ENCODE measurements at regions of chr9 and their contacts with region 1.

Region 1: GRCh38 chr9:109517901-109518377 is 19.8 kb upstream of the PTPN3 start:
- DNase-seq: no peak
- ATAC-seq: no peak

Region 2: DNA sequence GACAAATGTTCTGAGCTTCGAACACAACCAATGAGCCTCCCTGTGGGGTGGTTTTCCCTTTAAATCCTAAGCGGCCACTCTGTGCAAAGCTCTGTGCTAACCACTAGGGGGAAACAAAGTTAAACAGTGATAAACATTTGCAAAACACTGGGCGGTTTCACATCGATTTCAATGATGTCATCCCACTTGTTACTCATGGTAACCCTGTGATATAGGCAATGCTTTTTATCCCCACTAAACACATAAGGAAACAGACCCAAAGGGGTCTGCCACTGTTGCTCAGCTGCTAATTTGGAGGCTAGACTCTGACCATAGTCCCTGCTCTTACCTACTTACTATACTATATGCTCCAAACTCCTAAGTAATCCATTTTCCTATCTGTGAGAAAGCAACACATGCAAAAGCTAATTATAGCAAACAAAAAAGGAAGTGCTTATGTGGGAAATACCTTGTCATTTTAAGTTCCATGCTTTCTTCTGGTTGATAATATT is 77.1 kb before region 1 on chr9:
- intact Hi-C with region 1: loop called (anchors 10 kb)
- DNase-seq: no peak
- ATAC-seq: peak; percentile 75

Region 3: DNA sequence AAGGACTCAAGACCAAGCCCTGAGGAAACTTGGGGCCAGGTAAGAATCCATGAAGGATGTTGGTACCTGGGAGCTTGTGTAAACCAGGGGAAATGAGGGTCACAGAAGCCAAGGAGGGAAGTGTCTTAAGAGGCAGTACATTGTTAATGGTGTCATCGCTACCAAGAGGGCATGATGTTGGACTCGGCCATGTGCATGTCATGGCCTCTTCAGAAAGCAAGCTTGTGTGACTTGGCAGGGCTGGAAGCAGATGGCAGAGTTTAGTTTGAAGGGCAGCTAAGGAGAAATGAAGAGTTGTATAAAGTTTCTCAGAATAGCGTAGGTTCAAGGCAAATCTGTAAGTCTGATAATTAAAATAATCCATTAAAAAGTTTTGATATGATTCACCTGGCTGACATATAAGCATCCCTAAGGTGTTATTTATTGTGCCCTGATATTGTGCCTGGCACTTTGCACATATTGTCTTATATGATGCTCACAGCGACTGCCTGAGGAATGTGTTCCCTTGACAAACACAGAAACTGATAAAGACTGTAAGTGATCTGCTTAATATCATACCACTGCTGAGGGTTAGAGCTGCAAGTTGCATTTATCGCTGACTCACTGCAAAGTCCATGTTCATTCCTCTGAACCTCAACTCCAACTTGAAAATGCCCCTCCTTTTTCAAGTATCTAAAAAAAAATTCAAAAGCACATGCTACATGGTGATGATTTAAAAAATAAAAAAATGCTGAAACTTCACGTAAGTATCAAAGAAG is 61.4 kb after region 1 on chr9:
- intact Hi-C with region 1: no loop called
- DNase-seq: no peak
- ATAC-seq: peak; percentile 86

Region 4: GRCh38 chr9:109817846-109818472 is 300.0 kb after region 1 on chr9:
- intact Hi-C with region 1: no loop called
- DNase-seq: no peak
- ATAC-seq: peak; percentile 87

Measured in left ventricle myocardium superior (tissue), 1 donor.